Activated T-helper 1 cell treated with anti-CD3 and anti-CD28 coated beads, Interleukin-12 subunit alpha, Interleukin-12 subunit beta, Interleukin-2, Interleukin-4 antibody, amounts not matched to agents 30 ng/mL and 10 ng/mL and 1 ng/mL, durations not matched to agents 14 hours and 24 hours and 36 hours (primary cell): ENCODE measurements at regions of chr13 and their contacts with region 1.

Region 1: DNA sequence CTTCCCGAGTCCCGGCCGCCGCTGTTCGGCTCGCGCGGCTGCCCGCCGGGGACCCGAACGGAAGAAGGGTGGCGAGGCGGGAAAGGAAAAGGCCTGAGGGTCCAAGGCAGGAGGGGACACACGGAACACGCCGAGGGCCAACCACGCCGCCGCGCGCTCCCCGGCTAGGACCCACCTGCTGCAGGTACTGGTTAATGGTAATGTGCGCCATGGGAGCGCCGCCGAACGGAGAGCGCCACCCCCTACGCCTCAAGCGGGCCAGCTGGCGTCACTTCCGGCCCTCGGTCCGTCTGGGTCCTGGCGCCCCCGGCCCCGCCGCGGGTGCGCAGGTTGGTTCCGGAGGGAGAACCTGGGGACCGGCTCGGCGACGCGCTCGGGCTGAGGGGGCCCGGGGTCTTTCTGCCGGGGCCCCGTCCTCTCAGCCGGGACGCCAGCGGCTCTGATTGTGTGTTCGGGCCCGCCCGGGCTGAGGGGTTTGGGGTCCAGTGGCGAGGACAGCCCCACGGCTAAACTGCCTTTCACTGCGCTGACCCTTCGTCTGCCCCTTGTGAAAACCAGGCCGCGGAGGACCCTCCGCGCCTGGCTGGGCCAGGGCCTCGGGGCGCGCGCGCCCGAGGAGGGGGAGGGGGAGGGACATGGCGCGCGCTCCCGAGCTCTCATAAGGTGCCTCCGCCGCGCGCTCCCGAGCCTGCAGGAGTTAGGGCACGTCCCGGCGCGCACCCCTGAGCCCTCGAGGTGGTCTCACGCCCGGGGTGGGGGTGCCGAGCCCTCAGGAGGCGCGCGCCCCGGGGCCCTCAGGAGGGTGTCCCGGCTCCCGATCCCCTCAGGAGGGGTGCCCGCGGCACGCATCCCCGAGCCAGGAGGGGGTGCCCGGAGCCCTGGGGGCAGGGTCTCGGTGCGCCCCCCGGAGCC is at the start of gene PCID2:
- DNase-seq: peak; percentile 90
- H3K4me3 Mint-ChIP-seq: peak within 1 kb of the TSS; percentile 94
- H3K27ac Mint-ChIP-seq: peak within 1 kb of the TSS; percentile 46
- H3K4me1 Mint-ChIP-seq: peaks cover 61% of the 10 kb centered on the region
- H3K27me3 Mint-ChIP-seq: no peaks in the 10 kb centered on the region
- total RNA-seq, gene PCID2: 71.5 and 78.9 TPM in 2 replicates

Region 2: DNA sequence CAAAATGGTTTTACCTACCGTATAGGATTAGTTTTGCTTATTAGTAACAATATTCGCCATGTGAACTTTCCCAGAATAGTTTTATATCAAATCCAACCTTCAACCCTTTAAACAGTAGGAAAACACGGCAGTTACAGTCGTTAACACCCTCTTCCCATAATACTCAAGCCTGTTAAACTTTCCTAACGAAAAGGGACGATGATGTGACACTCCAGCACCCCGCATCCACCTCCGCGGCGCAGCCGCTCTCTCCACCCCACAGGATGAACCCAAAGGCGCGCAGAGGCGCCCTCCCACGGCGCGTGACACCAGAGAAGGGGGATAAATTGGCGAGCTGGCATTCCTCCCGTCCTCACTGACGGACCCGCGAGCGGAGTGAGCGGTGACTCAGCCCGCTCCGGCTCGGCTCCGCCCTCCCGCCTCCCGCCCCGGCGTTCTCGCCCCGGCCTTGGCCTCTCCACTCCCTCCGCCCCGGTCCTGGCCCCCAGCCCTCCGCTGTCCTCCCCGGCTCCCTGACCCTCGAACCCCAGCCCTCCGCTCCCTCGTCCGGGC is 621.4 kb before region 1 on chr13:
- intact Hi-C with region 1: loop called (anchors 2 kb)
- DNase-seq: peak; percentile 59
- H3K4me3 Mint-ChIP-seq: peak overlapping the region; percentile 96
- H3K27ac Mint-ChIP-seq: peak overlapping the region; percentile 93
- H3K4me1 Mint-ChIP-seq: peaks cover 36% of the 10 kb centered on the region
- H3K27me3 Mint-ChIP-seq: no peaks in the 10 kb centered on the region

Region 3: GRCh38 chr13:112942689-112943308 is 265.9 kb before region 1 on chr13:
- intact Hi-C with region 1: loop called (anchors 2 kb)
- DNase-seq: peak; percentile 89
- H3K4me3 Mint-ChIP-seq: peak overlapping the region; percentile 93
- H3K27ac Mint-ChIP-seq: peak overlapping the region; percentile 60
- H3K4me1 Mint-ChIP-seq: peaks cover 8% of the 10 kb centered on the region
- H3K27me3 Mint-ChIP-seq: peaks cover 34% of the 10 kb centered on the region

Region 4: GRCh38 chr13:112983428-112984196 is 225.1 kb before region 1 on chr13:
- intact Hi-C with region 1: no loop called
- DNase-seq: no peak
- H3K4me3 Mint-ChIP-seq: no peak overlapping the region
- H3K27ac Mint-ChIP-seq: no peak overlapping the region
- H3K4me1 Mint-ChIP-seq: no peaks in the 10 kb centered on the region
- H3K27me3 Mint-ChIP-seq: no peaks in the 10 kb centered on the region

Region 5: GRCh38 chr13:113001241-113002140 is 207.2 kb before region 1 on chr13:
- intact Hi-C with region 1: no loop called
- DNase-seq: no peak
- H3K4me3 Mint-ChIP-seq: no peak overlapping the region
- H3K27ac Mint-ChIP-seq: no peak overlapping the region
- H3K4me1 Mint-ChIP-seq: no peaks in the 10 kb centered on the region
- H3K27me3 Mint-ChIP-seq: peaks cover 8% of the 10 kb centered on the region

Region 6: DNA sequence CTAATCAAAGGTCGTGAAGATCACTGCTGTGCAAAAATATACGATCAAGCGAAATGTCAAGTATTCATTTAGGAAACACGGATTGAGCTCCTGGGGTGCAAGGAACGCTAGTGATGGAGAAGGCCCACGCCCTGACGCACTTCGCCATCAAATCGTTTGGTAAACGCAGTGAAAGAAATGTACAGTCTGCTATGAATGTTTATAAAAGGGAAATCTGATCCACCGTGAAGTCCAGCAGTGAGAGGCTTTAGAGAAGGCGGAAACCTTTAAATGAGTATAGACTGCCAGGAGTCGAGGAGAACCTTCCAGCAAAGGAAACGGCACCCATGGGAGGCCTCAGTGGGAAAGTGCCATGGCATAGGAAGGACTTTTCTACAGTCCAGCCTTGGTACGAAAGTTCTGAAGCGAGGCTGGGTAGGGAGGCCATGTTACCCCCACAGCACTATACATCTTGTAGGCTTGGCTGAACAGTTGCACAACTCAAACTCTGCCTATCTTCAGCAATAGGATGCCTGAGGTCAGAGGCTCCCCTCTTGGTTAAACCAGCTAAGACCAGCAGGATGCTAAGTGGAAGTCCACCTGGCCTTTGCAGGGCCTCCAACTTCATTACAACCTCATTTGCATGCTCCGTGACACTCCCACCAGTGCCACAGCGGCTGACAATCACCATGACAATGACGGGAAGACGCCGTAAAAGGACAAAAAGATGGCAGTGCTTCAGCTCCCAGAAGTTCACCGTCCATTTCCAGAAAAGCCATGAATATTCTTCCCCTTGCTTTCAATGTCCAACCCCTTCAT is 20.6 kb before region 1 on chr13:
- intact Hi-C with region 1: loop called (anchors 2 kb)
- DNase-seq: no peak
- H3K4me3 Mint-ChIP-seq: no peak overlapping the region
- H3K27ac Mint-ChIP-seq: no peak overlapping the region
- H3K4me1 Mint-ChIP-seq: peaks cover 43% of the 10 kb centered on the region
- H3K27me3 Mint-ChIP-seq: no peaks in the 10 kb centered on the region

Region 7: GRCh38 chr13:113258321-113259054 is 49.8 kb after region 1 on chr13:
- intact Hi-C with region 1: no loop called
- DNase-seq: no peak
- H3K4me3 Mint-ChIP-seq: no peak overlapping the region
- H3K27ac Mint-ChIP-seq: no peak overlapping the region
- H3K4me1 Mint-ChIP-seq: no peaks in the 10 kb centered on the region
- H3K27me3 Mint-ChIP-seq: no peaks in the 10 kb centered on the region

Region 8: DNA sequence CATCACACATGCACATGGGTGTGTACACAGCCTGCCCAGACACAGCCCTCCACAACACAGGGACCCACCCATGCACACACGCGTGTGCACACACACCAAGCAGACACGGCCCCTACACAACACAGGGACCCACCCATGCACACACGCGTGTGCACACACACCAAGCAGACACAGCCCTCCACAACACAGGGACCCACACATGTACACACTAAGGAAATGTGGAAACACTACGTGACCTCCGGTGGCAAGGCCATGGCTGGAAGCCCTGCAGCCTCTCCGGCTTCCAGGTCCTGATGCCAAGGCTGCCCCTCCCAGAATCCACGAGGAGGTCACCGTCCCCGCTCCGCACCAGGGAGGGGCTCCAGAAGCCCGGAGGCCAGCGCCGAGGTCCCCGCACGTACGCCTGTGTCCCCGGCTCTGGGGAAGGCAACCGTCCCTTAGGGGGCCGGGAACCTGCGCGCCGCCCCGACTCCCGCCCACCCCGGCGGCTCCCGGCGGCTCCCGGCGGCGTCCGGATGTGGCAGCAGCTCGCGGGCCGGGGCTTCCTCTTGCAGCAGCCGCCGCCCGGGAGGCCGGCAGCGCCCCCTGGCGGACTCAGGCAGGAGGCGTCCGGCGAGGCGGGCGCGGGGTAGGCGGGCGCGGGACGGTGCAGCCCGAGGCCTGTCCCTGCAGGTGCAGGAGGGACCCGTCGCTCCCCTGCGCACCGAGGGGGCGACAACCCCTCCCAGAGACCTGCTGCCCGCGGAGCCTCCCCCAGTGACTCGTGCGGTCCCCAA is 185.1 kb after region 1 on chr13:
- intact Hi-C with region 1: loop called (anchors 2 kb)
- DNase-seq: peak; percentile 80
- H3K4me3 Mint-ChIP-seq: peak overlapping the region; percentile 89
- H3K27ac Mint-ChIP-seq: peak overlapping the region; percentile 66
- H3K4me1 Mint-ChIP-seq: peaks cover 5% of the 10 kb centered on the region
- H3K27me3 Mint-ChIP-seq: peaks cover 10% of the 10 kb centered on the region

Region 9: DNA sequence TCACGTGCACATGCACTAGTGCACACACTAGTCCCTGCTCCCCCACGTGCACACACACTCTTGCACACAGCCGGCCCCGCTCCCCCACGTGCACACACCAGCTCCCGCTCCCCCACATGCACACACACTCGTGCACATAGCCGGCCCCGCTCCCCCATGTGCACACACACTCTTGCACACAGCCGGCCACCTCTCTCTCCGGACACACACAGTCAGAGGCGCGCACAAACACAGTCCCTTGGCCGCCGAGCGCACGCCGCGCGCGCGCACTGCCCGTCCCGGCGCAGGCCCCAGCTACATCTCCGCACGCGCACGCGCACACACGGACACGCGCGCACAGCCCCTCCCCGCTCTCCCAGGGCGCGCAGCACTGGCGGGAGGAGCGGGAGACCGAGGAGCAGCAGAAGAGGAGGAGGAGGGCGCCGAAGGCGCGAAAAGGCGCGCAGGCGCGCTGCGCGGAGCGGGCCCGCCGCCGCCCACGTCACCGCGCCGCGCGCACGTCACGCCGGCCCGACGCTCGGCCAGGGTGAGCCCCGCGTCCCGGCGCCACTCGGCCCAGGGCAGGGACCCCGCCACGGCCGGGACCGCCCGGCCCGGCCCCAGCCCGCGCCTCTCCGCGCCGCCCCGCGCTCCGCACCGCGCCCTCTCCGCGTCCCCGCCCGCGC is 375.7 kb after region 1 on chr13 and contains the start of gene TFDP1:
- intact Hi-C with region 1: loop called (anchors 1 kb)
- DNase-seq: peak; percentile 86
- H3K4me3 Mint-ChIP-seq: peak within 1 kb of the TSS; percentile 90
- H3K27ac Mint-ChIP-seq: peak within 1 kb of the TSS; percentile 89
- H3K4me1 Mint-ChIP-seq: peaks cover 36% of the 10 kb centered on the region
- H3K27me3 Mint-ChIP-seq: peaks cover 9% of the 10 kb centered on the region
- total RNA-seq, gene TFDP1: 171 and 173 TPM in 2 replicates

Region 10: GRCh38 chr13:113647351-113648215 is 438.9 kb after region 1 on chr13:
- intact Hi-C with region 1: no loop called
- DNase-seq: no peak
- H3K4me3 Mint-ChIP-seq: no peak overlapping the region
- H3K27ac Mint-ChIP-seq: no peak overlapping the region
- H3K4me1 Mint-ChIP-seq: peaks cover 10% of the 10 kb centered on the region
- H3K27me3 Mint-ChIP-seq: no peaks in the 10 kb centered on the region